Activated B cell treated with CpG ODN at 0.5 μM for 24 hours (primary cell): ENCODE measurements at regions of chr7 and their contacts with region 1.

Region 1: GRCh38 chr7:37352974-37353948 is 95.4 kb downstream of the ELMO1 start:
- DNase-seq: peak; percentile 44
- ATAC-seq: peak; percentile 70
- H3K4me3 Mint-ChIP-seq: peak overlapping the region; percentile 96
- H3K27ac Mint-ChIP-seq: peak overlapping the region; percentile 86
- H3K4me1 Mint-ChIP-seq: peaks cover 59% of the 10 kb centered on the region
- H3K27me3 Mint-ChIP-seq: no peaks in the 10 kb centered on the region
- CTCF ChIP-seq: peak; percentile 46

Region 2: DNA sequence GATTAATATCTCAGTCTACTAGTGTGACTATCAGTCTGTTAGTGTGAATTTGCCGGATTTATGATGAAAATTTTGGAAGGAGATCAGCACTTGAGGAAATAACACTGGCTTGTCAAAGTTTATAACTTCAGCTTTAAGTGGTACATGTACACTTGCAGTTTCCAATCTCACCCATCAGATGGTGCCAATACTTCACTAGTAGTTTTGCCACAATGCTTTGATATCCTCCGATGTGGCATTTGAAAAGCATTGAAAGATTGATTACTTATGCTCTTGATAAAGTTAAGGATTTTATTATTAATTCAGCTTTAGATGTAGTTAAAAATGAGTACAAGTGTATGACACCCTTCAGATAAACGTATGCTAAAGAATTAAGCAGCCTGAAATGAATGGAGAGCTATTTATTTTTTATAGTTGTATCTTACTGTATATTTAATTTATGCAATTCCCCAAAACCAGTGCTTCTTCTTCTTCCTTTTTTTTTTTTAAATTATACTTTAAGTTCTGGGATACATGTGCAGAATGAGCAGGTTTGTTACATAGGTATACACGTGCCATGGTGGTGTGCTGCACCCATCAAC is 865.4 kb before region 1 on chr7:
- CTCF ChIA-PET with region 1: interaction called, 4 read pairs
- POLR2A ChIA-PET with region 1: no interaction called
- intact Hi-C with region 1: loop called (anchors 1 kb)
- DNase-seq: no peak
- ATAC-seq: no peak
- H3K4me3 Mint-ChIP-seq: no peak overlapping the region
- H3K27ac Mint-ChIP-seq: no peak overlapping the region
- H3K4me1 Mint-ChIP-seq: no peaks in the 10 kb centered on the region
- H3K27me3 Mint-ChIP-seq: peaks cover 8% of the 10 kb centered on the region
- CTCF ChIP-seq: no peak

Region 3: DNA sequence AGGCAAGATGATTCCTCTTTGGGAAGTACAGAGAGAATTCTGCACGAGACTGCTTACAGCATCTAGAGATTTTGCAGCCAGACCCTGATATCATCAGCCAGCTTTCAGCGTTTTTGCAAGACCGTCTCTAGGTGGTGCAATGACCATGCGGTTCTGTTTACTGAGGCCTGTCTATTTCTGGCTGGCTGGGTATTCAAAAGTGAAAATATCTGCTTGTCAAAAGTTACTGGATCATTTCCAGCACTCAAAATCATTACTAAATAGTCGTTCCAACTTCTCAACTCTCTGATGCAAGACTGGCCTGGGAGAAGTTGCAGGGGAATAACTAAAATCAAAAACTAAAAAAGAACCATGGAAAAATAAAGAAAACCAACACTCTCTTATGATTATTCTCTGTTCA is 144.7 kb before region 1 on chr7:
- CTCF ChIA-PET with region 1: interaction called, 42 read pairs
- POLR2A ChIA-PET with region 1: interaction called, 3 read pairs
- intact Hi-C with region 1: loop called (anchors 1 kb)
- DNase-seq: no peak
- ATAC-seq: peak; percentile 75
- H3K4me3 Mint-ChIP-seq: no peak overlapping the region
- H3K27ac Mint-ChIP-seq: peak overlapping the region; percentile 10
- H3K4me1 Mint-ChIP-seq: peaks cover 11% of the 10 kb centered on the region
- H3K27me3 Mint-ChIP-seq: no peaks in the 10 kb centered on the region
- CTCF ChIP-seq: no peak

Region 4: DNA sequence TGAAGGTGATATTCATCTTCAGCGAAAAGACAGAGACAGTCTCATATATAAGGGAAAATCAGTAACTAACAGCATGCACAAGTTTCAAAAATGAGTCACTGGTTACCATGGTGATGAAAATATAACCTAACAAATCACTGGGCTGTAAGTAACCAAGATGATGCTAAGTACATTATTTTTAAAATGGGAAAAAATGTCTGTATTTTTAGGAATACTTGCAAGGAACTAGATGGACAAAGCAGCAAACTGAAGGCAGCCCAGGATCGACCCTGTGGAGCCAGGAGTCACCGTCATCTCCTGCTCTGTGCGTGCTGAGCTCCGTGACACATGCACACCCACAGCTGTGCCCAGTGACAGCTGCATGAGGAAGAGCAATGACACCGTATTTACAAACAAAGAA is 41.9 kb before region 1 on chr7:
- CTCF ChIA-PET with region 1: interaction called, 4 read pairs
- POLR2A ChIA-PET with region 1: interaction called, 5 read pairs
- intact Hi-C with region 1: loop called (anchors 2 kb)
- DNase-seq: no peak
- ATAC-seq: peak; percentile 74
- H3K4me3 Mint-ChIP-seq: no peak overlapping the region
- H3K27ac Mint-ChIP-seq: peak overlapping the region; percentile 77
- H3K4me1 Mint-ChIP-seq: peaks cover 73% of the 10 kb centered on the region
- H3K27me3 Mint-ChIP-seq: no peaks in the 10 kb centered on the region
- CTCF ChIP-seq: no peak

Region 5: GRCh38 chr7:37391791-37392672 is 38.8 kb after region 1 on chr7:
- CTCF ChIA-PET with region 1: no interaction called
- POLR2A ChIA-PET with region 1: no interaction called
- intact Hi-C with region 1: loop called (anchors 2 kb)
- DNase-seq: no peak
- ATAC-seq: peak; percentile 83
- H3K4me3 Mint-ChIP-seq: peak overlapping the region; percentile 28
- H3K27ac Mint-ChIP-seq: peak overlapping the region; percentile 46
- H3K4me1 Mint-ChIP-seq: peaks cover 64% of the 10 kb centered on the region
- H3K27me3 Mint-ChIP-seq: no peaks in the 10 kb centered on the region
- CTCF ChIP-seq: no peak

Region 6: GRCh38 chr7:37495574-37496184 is 142.4 kb after region 1 on chr7:
- CTCF ChIA-PET with region 1: interaction called, 27 read pairs
- POLR2A ChIA-PET with region 1: interaction called, 3 read pairs
- intact Hi-C with region 1: loop called (anchors 1 kb)
- DNase-seq: no peak
- ATAC-seq: peak; percentile 58
- H3K4me3 Mint-ChIP-seq: no peak overlapping the region
- H3K27ac Mint-ChIP-seq: no peak overlapping the region
- H3K4me1 Mint-ChIP-seq: no peaks in the 10 kb centered on the region
- H3K27me3 Mint-ChIP-seq: no peaks in the 10 kb centered on the region
- CTCF ChIP-seq: peak; percentile 91

Region 7: GRCh38 chr7:37833107-37833817 is 480.0 kb after region 1 on chr7:
- CTCF ChIA-PET with region 1: interaction called, 3 read pairs
- POLR2A ChIA-PET with region 1: no interaction called
- intact Hi-C with region 1: loop called (anchors 1 kb)
- DNase-seq: peak; percentile 23
- ATAC-seq: peak; percentile 71
- H3K4me3 Mint-ChIP-seq: peak overlapping the region; percentile 81
- H3K27ac Mint-ChIP-seq: no peak overlapping the region
- H3K4me1 Mint-ChIP-seq: peaks cover 15% of the 10 kb centered on the region
- H3K27me3 Mint-ChIP-seq: no peaks in the 10 kb centered on the region
- CTCF ChIP-seq: peak; percentile 87